H1 (cell line): ENCODE measurements at regions of chr11 and their contacts with region 1.

Region 1: GRCh38 chr11:9259981-9260837 is 4.9 kb downstream of the DENND5A start:
- DNase-seq: no peak
- H3K4me3 ChIP-seq: no peak overlapping the region
- H3K27ac ChIP-seq: no peak overlapping the region
- H3K4me1 ChIP-seq: 0 out of 7 replicates have a peak, but pooled peaks cover 0 to 2% (median 0%) of the 10 kb centered on the region in 4 experiments
- H3K27me3 ChIP-seq: no peaks in the 10 kb centered on the region
- CTCF ChIP-seq: peak in 2 of 3 experiments; percentile 28 to 33; a peak in 2 of 4 replicates
- EP300 ChIP-seq: no peak
- POLR2A ChIP-seq: no peak
- RAD21 ChIP-seq: peak; percentile 37 to 42; a peak in 3 of 4 replicates

Region 2: GRCh38 chr11:9273376-9274336 is 13.4 kb after region 1 on chr11:
- CTCF ChIA-PET with region 1: interaction called, 16 read pairs
- POLR2A ChIA-PET with region 1: interaction called, 22 read pairs
- DNase-seq: no peak
- H3K4me3 ChIP-seq: no peak overlapping the region
- H3K27ac ChIP-seq: no peak overlapping the region
- H3K4me1 ChIP-seq: no peaks in the 10 kb centered on the region
- H3K27me3 ChIP-seq: no peaks in the 10 kb centered on the region
- CTCF ChIP-seq: no peak
- EP300 ChIP-seq: no peak
- POLR2A ChIP-seq: no peak
- RAD21 ChIP-seq: no peak